ENCODE measurements at regions of chr15 and their contacts with region 1.

Region 1: DNA sequence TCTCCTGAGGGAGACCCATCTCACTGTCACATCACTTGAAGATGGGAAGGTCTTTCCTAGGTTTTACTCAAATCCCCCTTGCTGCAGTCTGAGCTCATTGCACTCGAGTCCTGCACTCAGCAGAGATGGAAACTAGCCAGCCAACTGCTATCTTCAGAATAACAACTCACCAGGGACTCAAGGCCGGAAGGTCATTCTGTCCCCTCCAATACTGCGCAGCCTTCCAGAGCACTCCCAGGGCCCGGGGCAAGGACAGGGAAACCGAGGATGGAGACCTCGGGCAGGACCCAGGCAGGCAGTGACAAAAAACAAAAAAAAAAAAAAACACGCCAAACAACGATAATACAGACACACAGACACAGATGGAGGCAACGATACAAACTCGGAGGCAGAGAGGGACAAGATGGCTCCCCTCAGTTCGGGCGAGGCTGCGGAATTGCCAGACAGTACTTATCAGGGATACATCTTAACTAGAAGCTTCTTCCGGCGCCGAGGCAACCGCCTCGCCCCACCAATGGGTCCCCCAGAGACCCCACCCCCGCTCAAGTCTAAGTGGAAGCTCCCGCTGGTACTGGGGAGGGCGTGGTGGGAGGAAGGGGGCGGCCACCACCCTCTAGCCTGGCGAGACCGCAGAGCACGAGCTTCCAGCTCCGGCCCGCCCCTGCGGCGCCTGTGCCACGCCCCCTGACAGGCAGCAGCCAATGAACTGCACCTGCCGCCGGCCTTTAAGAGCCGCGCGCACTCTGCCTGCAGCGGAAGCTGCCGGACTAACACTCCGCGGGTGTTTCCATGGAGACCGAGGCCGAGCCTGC is 7.0 kb upstream of the MAP1A start:
- DNase-seq: peak; percentile 98
- CTCF ChIP-seq: no peak

Region 2: GRCh38 chr15:43440721-43441281 is 69.6 kb before region 1 on chr15:
- CTCF ChIA-PET with region 1: interaction called, 10 read pairs
- POLR2A ChIA-PET with region 1: interaction called, 3 read pairs
- DNase-seq: peak; percentile 42
- CTCF ChIP-seq: no peak

Region 3: GRCh38 chr15:43499635-43500034 is 10.8 kb before region 1 on chr15:
- CTCF ChIA-PET with region 1: interaction called, 24 read pairs
- POLR2A ChIA-PET with region 1: no interaction called
- DNase-seq: no peak
- CTCF ChIP-seq: no peak

Region 4: DNA sequence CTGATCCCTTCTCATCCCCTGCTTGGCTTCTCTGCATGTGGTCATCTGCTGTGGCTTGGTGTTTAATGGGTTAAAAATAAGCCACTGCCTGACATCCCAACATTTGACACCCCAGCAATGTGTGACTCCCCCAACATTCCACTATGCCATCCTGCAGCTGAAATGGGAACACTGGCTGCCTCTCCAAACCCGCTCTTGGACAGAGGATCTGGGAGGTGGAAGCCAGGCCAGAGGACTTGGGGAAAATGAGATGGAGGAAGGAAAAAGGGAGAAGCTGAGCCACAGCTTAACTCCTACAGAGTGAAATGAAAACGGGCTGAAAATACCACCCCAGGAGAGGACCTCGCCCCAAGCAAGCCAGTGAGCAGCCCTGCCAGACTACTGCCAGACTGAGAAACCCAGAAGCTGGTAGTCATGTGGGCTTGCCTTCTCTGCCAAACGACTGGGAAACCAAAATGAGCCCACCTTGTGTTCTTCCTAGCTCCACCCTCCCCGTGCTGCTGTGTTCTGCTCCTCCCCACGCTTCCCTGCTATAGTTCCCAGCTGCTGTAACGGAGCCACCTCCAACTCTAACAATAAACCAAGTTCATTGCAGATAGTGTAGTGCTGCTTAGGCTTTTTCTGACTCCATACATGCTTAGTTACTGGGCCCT is 20.7 kb after region 1 on chr15:
- CTCF ChIA-PET with region 1: interaction called, 41 read pairs
- POLR2A ChIA-PET with region 1: no interaction called
- DNase-seq: no peak
- CTCF ChIP-seq: no peak